Ovary (tissue), 10 donors: ENCODE measurements at regions of chr4 and their contacts with region 1.

Region 1: DNA sequence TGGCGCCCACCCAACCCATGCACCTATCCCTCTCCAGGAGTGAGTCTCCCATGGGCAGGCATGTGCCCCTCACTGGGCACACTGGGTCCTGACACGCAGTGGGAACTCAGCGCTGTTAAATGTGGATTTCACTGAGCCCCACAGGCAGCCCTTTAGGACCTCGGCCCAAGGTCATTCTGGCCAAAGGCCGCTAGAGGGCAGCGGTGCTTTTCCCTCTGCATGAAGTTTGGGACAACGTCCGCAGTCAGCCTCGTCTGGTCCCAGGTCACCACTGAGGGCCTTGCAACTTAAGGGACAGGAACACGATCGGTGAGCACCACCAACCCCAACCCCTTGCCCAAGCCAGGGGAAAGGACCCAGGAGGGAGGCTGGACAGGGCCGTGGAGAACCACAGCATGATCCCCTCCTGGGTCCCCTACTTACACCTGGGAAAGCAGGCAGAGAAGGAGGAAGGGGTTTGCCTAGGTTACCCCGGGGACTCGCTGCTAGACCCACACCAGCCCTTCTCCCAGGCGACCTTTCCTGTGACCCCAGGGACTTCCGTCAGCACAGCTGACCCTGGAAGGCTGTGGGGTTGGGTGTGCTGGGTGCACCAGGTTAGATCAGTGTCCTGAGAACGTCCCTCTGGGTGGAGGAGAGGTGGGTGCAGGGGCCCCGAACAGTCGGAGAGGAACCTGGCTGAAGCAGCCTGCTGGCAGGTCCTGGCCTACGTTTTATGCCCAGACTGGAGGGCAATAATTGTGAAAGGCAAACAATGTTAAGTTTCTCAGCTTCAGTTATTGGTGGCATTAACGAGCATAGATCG is 24.0 kb downstream of the CYTL1 start:
- DNase-seq: peak; percentile 55 to 78 (median 70)
- H3K4me3 ChIP-seq: no peak overlapping the region
- H3K27ac ChIP-seq: no peak overlapping the region
- H3K4me1 ChIP-seq: peaks cover 11% of the 10 kb centered on the region
- H3K27me3 ChIP-seq: no peaks in the 10 kb centered on the region
- CTCF ChIP-seq: peak; percentile 54 to 59 (median 54)
- EP300 ChIP-seq: no peak
- POLR2A ChIP-seq: no peak

Region 2: GRCh38 chr4:4488405-4489404 is 506.6 kb before region 1 on chr4:
- intact Hi-C with region 1: loop called in 2 of 4 experiments (anchors 5 kb)
- DNase-seq: peak; percentile 70 to 82 (median 72)
- H3K4me3 ChIP-seq: no peak overlapping the region
- H3K27ac ChIP-seq: no peak overlapping the region
- H3K4me1 ChIP-seq: peaks cover 2% of the 10 kb centered on the region
- H3K27me3 ChIP-seq: no peaks in the 10 kb centered on the region
- CTCF ChIP-seq: peak; percentile 79 to 84 (median 79)
- EP300 ChIP-seq: no peak
- POLR2A ChIP-seq: no peak

Region 3: DNA sequence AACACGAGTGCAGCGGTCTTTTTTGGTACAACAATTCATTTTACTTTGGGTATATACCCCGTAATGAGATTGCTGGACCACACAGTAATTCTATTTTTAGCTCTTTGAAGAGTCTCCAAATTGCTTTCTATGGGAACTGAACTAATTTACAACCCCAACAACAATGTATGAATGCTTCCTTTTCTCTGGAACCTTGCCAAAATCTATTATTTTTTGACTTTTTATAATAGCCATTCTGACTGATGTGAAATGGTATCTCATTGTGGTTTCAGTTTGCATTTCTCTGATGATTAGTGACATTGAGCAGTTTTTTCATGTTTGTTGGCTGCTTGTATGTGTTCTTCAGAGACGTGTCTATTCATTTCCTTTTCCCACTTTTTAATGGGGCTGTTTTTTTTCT is 296.8 kb after region 1 on chr4:
- intact Hi-C with region 1: no loop called
- DNase-seq: no peak
- H3K4me3 ChIP-seq: no peak overlapping the region
- H3K27ac ChIP-seq: no peak overlapping the region
- H3K4me1 ChIP-seq: no peaks in the 10 kb centered on the region
- H3K27me3 ChIP-seq: no peaks in the 10 kb centered on the region
- CTCF ChIP-seq: no peak
- EP300 ChIP-seq: no peak
- POLR2A ChIP-seq: no peak